ENCODE measurements at regions of chr4 and their contacts with region 1.

Region 1: DNA sequence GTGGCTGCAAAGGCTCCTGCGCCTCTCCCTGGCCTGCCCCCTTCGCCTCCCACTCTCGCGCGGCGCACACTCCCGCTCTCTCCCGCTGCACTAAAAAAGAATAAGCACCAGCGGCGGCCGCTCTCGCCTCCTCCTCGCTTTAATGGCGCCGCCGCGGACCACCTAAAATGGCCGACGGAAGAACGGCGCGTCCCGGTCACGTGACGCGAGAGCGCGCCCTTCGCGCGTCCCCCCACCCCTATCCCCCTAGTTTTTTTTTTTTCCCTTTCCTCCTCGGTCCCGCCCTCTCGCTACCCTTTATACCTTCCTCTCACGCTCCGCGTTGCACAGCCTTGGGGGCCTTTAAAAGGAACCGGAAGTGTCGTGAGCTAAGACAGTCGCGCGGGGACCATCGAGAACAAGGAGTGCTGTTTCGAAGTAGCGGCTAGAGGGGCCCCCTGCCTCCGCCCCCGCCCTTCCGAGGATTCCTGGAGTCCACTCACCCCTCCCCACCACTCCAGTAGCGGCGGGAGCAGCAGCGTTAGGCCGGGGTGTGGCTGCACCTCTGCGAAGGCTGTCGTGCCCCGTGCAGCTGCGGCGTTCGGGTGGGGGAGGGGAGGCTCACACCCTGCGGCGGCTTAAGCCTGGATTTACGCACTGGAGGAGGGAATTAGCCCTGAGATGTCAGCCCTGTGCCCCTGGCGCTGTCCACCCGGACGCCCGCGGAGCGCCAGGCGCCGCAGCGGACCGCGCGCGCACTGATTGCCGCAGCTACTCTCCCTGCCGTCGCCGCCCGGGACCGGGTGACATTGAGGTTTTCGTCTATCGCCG is at the start of gene HNRNPD:
- DNase-seq: peak; percentile 97
- H3K4me3 Mint-ChIP-seq: peak within 1 kb of the TSS; percentile 91
- H3K27ac Mint-ChIP-seq: peak within 1 kb of the TSS; percentile 98
- H3K4me1 Mint-ChIP-seq: peaks cover 38% of the 10 kb centered on the region
- H3K27me3 Mint-ChIP-seq: no peaks in the 10 kb centered on the region
- total RNA-seq, gene HNRNPD: 481 and 492 TPM in 2 replicates

Region 2: DNA sequence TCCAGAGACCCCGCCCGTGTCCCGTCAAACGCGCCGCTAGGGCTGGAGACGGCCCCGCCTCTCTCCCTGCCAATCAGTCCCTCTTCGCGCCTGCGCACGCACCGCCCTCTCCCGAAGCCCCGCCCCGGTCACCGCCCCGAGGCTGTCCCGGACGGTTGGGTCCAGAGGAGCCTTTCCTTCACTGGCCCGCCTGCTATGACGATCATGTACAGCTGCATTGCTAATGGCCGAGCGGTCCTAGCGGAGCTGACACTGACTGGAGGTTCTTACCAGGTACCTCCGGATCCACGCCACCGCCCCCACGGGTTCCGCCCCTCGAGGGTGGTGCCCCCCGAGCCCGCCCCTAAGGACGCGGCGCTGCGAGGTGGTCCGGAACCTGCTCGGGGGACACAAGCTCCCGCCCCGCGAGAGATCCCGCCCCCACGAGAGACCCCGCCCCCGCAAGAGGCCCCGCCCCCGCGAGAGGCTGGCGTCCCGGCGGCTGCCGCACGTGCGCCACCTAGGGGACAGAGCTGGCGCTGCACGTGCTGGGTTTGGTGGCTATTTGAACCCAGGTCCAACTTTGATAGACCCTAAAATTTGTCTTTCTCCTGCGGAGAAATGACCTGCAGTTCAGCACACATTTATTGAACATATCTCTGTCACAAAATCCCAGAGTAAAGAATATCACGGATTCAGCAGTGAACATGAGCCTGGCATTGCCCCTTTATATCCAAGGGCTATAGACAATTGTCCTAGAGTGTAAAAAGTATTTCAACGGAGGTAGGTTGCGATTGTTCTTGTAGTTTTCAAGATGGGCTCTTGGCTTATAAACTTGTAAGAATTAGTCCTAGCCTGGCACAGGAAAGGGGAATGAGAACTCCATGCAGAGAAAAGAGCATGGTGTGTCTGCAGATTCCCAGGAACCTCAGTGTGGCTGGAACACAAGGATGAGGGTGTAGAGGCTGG is 88.9 kb before region 1 on chr4:
- intact Hi-C with region 1: loop called (anchors 1 kb)
- DNase-seq: peak; percentile 100
- H3K4me3 Mint-ChIP-seq: peak overlapping the region; percentile 72
- H3K27ac Mint-ChIP-seq: peak overlapping the region; percentile 48
- H3K4me1 Mint-ChIP-seq: peaks cover 12% of the 10 kb centered on the region
- H3K27me3 Mint-ChIP-seq: peaks cover 27% of the 10 kb centered on the region

Region 3: DNA sequence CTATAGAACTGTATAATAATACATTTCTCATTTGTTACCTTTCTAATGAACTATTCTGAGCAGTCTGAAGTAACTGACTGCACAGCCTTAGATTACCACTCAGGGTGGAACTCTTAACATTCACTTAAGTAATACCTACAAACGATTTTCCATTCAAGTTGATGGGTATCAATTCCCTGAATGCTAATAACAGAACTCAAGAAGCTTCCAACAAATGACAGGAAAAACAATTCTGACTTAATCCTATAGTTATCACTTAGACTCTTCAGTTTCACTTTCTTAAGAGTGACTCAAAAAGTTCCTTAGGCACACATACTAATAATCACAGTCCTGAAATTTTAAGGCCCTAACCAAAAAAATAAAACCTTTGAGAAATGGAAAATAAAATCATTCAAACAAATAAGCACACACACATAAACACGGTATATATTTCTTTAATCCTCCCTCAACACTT is 21.1 kb before region 1 on chr4:
- intact Hi-C with region 1: loop called (anchors 2 kb)
- DNase-seq: no peak
- H3K4me3 Mint-ChIP-seq: peak overlapping the region; percentile 28
- H3K27ac Mint-ChIP-seq: peak overlapping the region; percentile 90
- H3K4me1 Mint-ChIP-seq: peaks cover 40% of the 10 kb centered on the region
- H3K27me3 Mint-ChIP-seq: no peaks in the 10 kb centered on the region

Region 4: GRCh38 chr4:82360298-82361177 is 13.5 kb before region 1 on chr4:
- intact Hi-C with region 1: loop called (anchors 1 kb)
- DNase-seq: peak; percentile 63
- H3K4me3 Mint-ChIP-seq: peak overlapping the region; percentile 33
- H3K27ac Mint-ChIP-seq: no peak overlapping the region
- H3K4me1 Mint-ChIP-seq: peaks cover 71% of the 10 kb centered on the region
- H3K27me3 Mint-ChIP-seq: no peaks in the 10 kb centered on the region

Region 5: DNA sequence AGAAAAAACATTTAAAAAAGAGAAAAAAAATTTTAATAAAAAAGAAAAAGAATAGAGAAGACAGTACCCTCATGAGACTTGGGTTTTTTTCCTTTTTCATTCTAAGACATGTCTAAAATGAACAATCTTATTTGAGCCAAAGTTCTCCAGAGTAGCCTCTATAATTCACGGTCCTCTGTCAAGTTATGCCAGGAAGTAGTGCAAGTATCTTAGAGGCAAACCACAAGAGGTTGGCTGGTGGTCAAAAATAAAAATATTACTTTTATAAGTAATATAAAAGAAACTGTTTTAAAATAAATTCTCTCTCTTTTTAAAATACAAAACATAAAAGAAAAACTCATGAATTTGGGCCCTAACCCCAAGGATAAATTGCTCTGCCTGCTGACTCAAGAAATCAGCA is 29.7 kb after region 1 on chr4:
- intact Hi-C with region 1: no loop called
- DNase-seq: no peak
- H3K4me3 Mint-ChIP-seq: no peak overlapping the region
- H3K27ac Mint-ChIP-seq: no peak overlapping the region
- H3K4me1 Mint-ChIP-seq: no peaks in the 10 kb centered on the region
- H3K27me3 Mint-ChIP-seq: peaks cover 18% of the 10 kb centered on the region

Region 6: DNA sequence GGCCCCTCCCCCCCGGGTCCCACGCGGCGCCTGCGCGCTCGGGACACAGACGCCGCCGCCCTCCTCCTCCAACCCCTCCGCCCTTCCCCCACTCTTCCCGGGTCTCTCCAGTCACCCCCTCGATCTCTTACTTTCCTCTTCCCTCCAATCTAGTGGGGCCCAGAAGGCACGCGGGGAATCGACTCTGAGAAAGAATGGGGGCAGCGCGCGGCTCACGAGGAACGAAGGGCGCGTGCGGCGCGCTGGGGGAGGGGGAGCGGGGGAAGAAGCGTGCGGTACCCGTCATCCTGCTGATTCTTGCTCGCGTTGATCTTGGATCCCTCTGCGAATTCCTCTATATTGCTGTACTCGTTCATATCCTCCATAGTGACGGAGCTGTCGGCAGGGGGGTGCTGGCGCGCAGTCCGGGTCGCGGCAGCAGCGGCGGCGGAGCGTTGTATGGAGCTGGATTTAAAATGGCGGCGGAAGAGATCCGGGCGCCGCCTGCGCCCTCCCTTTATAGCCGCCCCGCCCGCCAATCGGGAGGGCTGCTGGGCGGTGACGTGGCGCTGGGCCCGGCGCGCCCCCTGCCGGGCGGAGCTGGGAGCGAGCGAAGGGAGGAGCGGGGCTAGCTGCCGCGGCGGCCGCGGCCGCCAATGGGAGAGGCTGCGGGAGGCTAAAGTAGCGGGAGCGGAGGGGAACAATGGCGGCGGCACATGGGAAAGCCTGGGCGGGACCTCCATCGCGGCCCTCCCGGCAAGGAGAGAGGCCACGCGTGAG is 55.1 kb after region 1 on chr4:
- intact Hi-C with region 1: loop called (anchors 1 kb)
- DNase-seq: peak; percentile 98
- H3K4me3 Mint-ChIP-seq: peak overlapping the region; percentile 96
- H3K27ac Mint-ChIP-seq: peak overlapping the region; percentile 99
- H3K4me1 Mint-ChIP-seq: peaks cover 61% of the 10 kb centered on the region
- H3K27me3 Mint-ChIP-seq: no peaks in the 10 kb centered on the region

Region 7: GRCh38 chr4:83455281-83456129 is 1081.5 kb after region 1 on chr4 and contains the starts of genes HELQ and MRPS18C:
- intact Hi-C with region 1: loop called (anchors 5 kb)
- DNase-seq: peak; percentile 98
- H3K4me3 Mint-ChIP-seq: peak within 1 kb of the TSS; percentile 99
- H3K27ac Mint-ChIP-seq: peak within 1 kb of the TSS; percentile 100
- H3K4me1 Mint-ChIP-seq: peaks cover 26% of the 10 kb centered on the region
- H3K27me3 Mint-ChIP-seq: no peaks in the 10 kb centered on the region
- total RNA-seq, gene HELQ: 9.1 and 11.4 TPM in 2 replicates
- total RNA-seq, gene MRPS18C: 83.9 and 86.6 TPM in 2 replicates

Region 8: GRCh38 chr4:83484500-83485461 is 1110.8 kb after region 1 on chr4 and contains the start of gene ABRAXAS1:
- intact Hi-C with region 1: loop called (anchors 10 kb)
- DNase-seq: peak; percentile 98
- H3K4me3 Mint-ChIP-seq: peak within 1 kb of the TSS; percentile 96
- H3K27ac Mint-ChIP-seq: peak within 1 kb of the TSS; percentile 95
- H3K4me1 Mint-ChIP-seq: peaks cover 7% of the 10 kb centered on the region
- H3K27me3 Mint-ChIP-seq: no peaks in the 10 kb centered on the region
- total RNA-seq, gene ABRAXAS1: 10.4 and 12.0 TPM in 2 replicates

Measured in activated CD4-positive, alpha-beta T cell treated with anti-CD3 and anti-CD28 coated beads, Interleukin-2, amount 10 ng/mL, durations not matched to agents 24 days and 14 days (primary cell).